ENCODE measurements at regions of chr16 and their contacts with region 1.

Region 1: GRCh38 chr16:75402821-75403475 is 30.4 kb downstream of the CFDP1 start:
- DNase-seq: no peak
- H3K4me3 ChIP-seq: no peak overlapping the region
- CTCF ChIP-seq: peak; percentile 39

Region 2: GRCh38 chr16:75385507-75386152 is 17.3 kb before region 1 on chr16:
- CTCF ChIA-PET with region 1: interaction called, 11 read pairs
- POLR2A ChIA-PET with region 1: no interaction called
- DNase-seq: peak; percentile 71
- H3K4me3 ChIP-seq: no peak overlapping the region
- CTCF ChIP-seq: peak; percentile 26

Region 3: DNA sequence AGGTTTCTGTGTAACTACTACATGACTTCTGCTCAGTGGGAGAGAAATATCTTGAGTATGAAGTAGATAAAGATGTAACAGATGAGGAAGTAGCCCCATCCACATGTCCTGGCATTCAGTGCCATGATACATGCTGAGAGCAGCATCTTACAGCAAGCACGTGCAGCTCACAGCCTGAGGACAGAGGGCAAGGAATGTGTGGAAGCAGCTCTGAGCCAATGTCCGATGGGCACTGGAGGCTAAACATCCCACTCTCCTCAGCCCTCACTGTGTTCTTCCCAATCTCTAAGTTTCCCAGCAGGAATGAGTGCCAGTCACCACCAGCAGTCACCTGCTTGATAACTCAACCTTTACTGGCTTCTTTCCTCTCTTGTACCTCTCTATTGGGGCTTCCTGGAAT is 10.0 kb before region 1 on chr16:
- CTCF ChIA-PET with region 1: interaction called, 13 read pairs
- POLR2A ChIA-PET with region 1: no interaction called
- DNase-seq: no peak
- H3K4me3 ChIP-seq: no peak overlapping the region
- CTCF ChIP-seq: no peak

Region 4: GRCh38 chr16:75415169-75415905 is 12.4 kb after region 1 on chr16:
- CTCF ChIA-PET with region 1: interaction called, 34 read pairs
- POLR2A ChIA-PET with region 1: no interaction called
- DNase-seq: no peak
- H3K4me3 ChIP-seq: no peak overlapping the region
- CTCF ChIP-seq: no peak

Region 5: DNA sequence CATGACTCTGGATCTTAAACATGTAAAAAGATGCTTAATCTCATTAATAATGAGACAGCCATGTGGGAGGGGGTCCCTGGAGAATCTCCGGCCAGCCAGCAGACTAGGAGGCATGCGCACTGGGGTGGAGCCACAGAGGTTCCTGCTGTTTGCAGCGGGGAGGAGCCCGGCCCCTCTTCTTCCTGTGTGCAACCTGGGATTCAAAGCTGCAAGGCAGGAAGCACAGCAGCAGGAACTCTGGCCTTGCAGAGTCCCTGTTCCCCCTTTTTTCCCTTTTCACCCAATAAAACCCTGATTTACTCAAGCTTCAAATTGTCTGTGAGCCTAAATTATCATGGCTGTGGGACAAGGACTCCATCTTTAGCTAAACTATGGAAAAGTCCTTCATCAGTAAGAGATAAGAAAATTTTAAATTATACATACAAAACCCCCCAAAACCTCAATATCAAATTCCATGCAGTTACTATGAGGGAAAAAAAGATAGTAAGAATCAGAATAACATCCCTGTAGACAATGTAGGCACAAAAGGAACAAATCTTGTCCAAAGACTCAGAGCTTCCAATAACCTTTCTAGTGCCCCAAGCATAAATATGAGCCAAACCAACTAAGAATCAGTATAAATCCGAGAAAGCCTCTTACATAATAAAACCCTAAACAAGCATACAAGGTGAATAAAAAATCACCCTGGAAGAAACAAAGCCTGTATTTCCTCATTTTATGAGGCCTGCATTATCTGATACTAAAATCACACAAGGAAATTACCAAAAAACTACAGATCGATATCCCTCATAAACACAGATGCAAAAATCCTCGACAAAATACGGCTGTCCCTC is 18.3 kb after region 1 on chr16:
- CTCF ChIA-PET with region 1: interaction called, 33 read pairs
- POLR2A ChIA-PET with region 1: no interaction called
- DNase-seq: no peak
- H3K4me3 ChIP-seq: no peak overlapping the region
- CTCF ChIP-seq: no peak

Measured in AG04449 (cell line).